ENCODE measurements at regions of chr19 and their contacts with region 1.

Region 1: GRCh38 chr19:2900296-2901252 is at the start of gene ZNF57:
- DNase-seq: peak; percentile 92 to 99 (median 98)
- ATAC-seq: peak; percentile 96
- H3K4me3 ChIP-seq: peak within 1 kb of the TSS; percentile 85 to 90
- H3K4me3 Mint-ChIP-seq: peak within 1 kb of the TSS; percentile 97
- H3K27ac ChIP-seq: peak within 1 kb of the TSS; percentile 37 to 50
- H3K27ac Mint-ChIP-seq: peak within 1 kb of the TSS; percentile 86
- H3K4me1 ChIP-seq: peaks cover 10% of the 10 kb centered on the region
- H3K4me1 Mint-ChIP-seq: peaks cover 27% of the 10 kb centered on the region
- H3K27me3 ChIP-seq: no peaks in the 10 kb centered on the region
- H3K27me3 Mint-ChIP-seq: no peaks in the 10 kb centered on the region
- CTCF ChIP-seq: no peak
- total RNA-seq, gene ZNF57: 0.72 to 1.5 TPM

Region 2: GRCh38 chr19:2877398-2878331 is 22.9 kb before region 1 on chr19:
- CTCF ChIA-PET with region 1: no interaction called
- POLR2A ChIA-PET with region 1: no interaction called
- intact Hi-C with region 1: no loop called
- DNase-seq: no peak
- ATAC-seq: no peak
- H3K4me3 ChIP-seq: no peak overlapping the region
- H3K4me3 Mint-ChIP-seq: no peak overlapping the region
- H3K27ac ChIP-seq: no peak overlapping the region
- H3K27ac Mint-ChIP-seq: no peak overlapping the region
- H3K4me1 ChIP-seq: no peaks in the 10 kb centered on the region
- H3K4me1 Mint-ChIP-seq: no peaks in the 10 kb centered on the region
- H3K27me3 ChIP-seq: no peaks in the 10 kb centered on the region
- H3K27me3 Mint-ChIP-seq: no peaks in the 10 kb centered on the region
- CTCF ChIP-seq: no peak

Region 3: GRCh38 chr19:2944775-2945574 is 44.4 kb after region 1 on chr19 and contains the start of gene ZNF77:
- CTCF ChIA-PET with region 1: no interaction called
- POLR2A ChIA-PET with region 1: interaction called, 7 read pairs
- intact Hi-C with region 1: loop called (anchors 1 to 2 kb)
- DNase-seq: peak; percentile 97 to 100 (median 99)
- ATAC-seq: peak; percentile 97
- H3K4me3 ChIP-seq: peak within 1 kb of the TSS; percentile 80 to 84
- H3K4me3 Mint-ChIP-seq: peak within 1 kb of the TSS; percentile 96
- H3K27ac ChIP-seq: peak within 1 kb of the TSS; percentile 82 to 90
- H3K27ac Mint-ChIP-seq: peak within 1 kb of the TSS; percentile 97
- H3K4me1 ChIP-seq: peaks cover 21% of the 10 kb centered on the region
- H3K4me1 Mint-ChIP-seq: peaks cover 33% of the 10 kb centered on the region
- H3K27me3 ChIP-seq: no peaks in the 10 kb centered on the region
- H3K27me3 Mint-ChIP-seq: no peaks in the 10 kb centered on the region
- CTCF ChIP-seq: no peak
- total RNA-seq, gene ZNF77: 1.4 to 2.0 TPM

Region 4: DNA sequence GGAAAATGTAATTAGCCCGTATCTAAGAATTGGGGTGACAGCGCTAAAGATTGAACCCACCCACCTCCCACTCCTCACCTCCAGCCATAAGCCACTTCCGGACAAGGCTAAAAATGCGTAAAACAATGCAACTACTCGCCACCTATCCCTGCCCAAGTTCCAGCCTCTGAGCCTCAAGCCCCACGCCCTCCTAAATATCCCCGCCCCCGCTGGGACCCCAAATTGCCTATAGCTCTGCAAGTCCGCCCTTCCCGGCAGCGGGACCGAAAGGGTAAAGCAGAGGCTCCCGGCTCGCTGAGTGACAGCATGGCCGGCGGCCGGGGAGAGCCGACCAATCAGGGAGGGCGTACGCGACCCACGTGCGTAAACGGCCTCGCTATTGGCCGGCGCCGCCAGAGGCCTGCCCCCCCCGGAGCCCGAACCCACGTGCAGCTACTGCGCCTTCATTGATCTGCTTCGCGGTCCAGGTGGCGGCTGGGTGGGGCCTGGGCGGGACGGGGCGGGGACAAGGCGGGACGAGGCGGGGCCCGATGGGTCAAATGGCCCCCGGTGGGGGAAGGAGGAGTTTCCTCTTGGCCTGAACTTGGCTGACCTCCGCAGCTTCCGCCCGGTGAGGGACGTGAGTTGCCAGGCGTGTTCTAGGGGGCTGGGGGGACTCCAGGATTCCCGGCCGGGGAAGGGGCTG is 76.6 kb after region 1 on chr19 and contains the start of gene TLE6:
- CTCF ChIA-PET with region 1: no interaction called
- POLR2A ChIA-PET with region 1: no interaction called
- intact Hi-C with region 1: loop called in 1 of 2 experiments (anchors 2 kb)
- DNase-seq: peak; percentile 87 to 96 (median 93)
- ATAC-seq: peak; percentile 99
- H3K4me3 ChIP-seq: peak within 1 kb of the TSS; percentile 67 to 84
- H3K4me3 Mint-ChIP-seq: peak within 1 kb of the TSS; percentile 93
- H3K27ac ChIP-seq: no peak within 1 kb of the TSS
- H3K27ac Mint-ChIP-seq: peak within 1 kb of the TSS; percentile 52
- H3K4me1 ChIP-seq: peaks cover 12% of the 10 kb centered on the region
- H3K4me1 Mint-ChIP-seq: peaks cover 16% of the 10 kb centered on the region
- H3K27me3 ChIP-seq: no peaks in the 10 kb centered on the region
- H3K27me3 Mint-ChIP-seq: peaks cover 6% of the 10 kb centered on the region
- CTCF ChIP-seq: no peak
- total RNA-seq, gene TLE6: not detected